Activated CD4-positive, alpha-beta T cell treated with anti-CD3 and anti-CD28 coated beads, Interleukin-2, amount 10 ng/mL, durations not matched to agents 24 days and 14 days (primary cell): ENCODE measurements at regions of chr14 and their contacts with region 1.

Region 1: GRCh38 chr14:103078093-103078749 is 5.8 kb upstream of the LBHD2 start:
- DNase-seq: peak; percentile 91
- H3K4me3 Mint-ChIP-seq: no peak overlapping the region
- H3K27ac Mint-ChIP-seq: no peak overlapping the region
- H3K4me1 Mint-ChIP-seq: no peaks in the 10 kb centered on the region
- H3K27me3 Mint-ChIP-seq: peaks cover 4% of the 10 kb centered on the region

Region 2: DNA sequence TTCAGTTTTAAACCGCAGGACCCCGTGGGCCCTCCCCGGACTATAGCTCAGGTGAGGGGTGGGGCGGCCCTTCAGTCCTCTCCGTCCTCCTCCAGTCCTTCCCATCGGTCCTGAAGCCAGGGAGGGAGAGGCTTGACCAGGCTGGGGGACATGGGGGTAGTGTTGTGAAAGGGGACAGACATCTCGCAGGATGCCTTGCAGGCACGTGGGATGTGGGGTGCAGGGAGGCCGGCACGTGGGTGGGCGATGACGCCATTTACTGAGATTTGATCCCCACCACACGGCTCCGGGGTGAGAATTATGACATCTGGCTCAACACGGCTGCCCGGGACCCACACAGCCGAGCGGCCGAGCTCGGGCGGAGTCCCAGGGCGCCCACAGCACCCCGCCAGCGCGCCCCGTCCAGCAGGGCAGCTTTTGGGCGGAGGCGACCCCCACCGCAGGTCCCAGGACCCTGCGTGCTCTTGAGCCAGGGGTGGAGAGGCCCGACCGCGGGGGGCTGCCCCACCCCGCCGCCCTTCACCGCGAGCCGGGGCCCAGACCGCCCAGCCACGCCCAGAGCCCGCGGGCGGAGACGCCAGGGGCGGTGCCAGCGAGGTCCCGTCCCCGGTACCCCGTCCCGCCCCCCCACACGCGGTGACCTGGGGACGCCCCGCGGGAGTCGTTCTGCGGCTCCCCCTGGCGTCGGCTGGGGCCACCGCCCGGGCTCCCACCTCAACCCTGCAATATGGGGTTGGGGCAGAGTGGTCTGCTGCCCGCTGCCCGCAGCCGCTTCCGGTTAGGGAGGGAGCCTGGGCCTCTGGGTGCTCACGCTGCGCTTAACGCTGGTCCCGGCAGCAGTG is 13.0 kb after region 1 on chr14:
- intact Hi-C with region 1: loop called (anchors 1 kb)
- DNase-seq: peak; percentile 91
- H3K4me3 Mint-ChIP-seq: peak overlapping the region; percentile 59
- H3K27ac Mint-ChIP-seq: no peak overlapping the region
- H3K4me1 Mint-ChIP-seq: peaks cover 3% of the 10 kb centered on the region
- H3K27me3 Mint-ChIP-seq: peaks cover 3% of the 10 kb centered on the region

Region 3: GRCh38 chr14:103292426-103293374 is 214.5 kb after region 1 on chr14:
- intact Hi-C with region 1: loop called (anchors 2 kb)
- DNase-seq: peak; percentile 92
- H3K4me3 Mint-ChIP-seq: no peak overlapping the region
- H3K27ac Mint-ChIP-seq: no peak overlapping the region
- H3K4me1 Mint-ChIP-seq: no peaks in the 10 kb centered on the region
- H3K27me3 Mint-ChIP-seq: peaks cover 18% of the 10 kb centered on the region